HEK293 (cell line): ENCODE measurements at regions of chr17 and their contacts with region 1.

Region 1: DNA sequence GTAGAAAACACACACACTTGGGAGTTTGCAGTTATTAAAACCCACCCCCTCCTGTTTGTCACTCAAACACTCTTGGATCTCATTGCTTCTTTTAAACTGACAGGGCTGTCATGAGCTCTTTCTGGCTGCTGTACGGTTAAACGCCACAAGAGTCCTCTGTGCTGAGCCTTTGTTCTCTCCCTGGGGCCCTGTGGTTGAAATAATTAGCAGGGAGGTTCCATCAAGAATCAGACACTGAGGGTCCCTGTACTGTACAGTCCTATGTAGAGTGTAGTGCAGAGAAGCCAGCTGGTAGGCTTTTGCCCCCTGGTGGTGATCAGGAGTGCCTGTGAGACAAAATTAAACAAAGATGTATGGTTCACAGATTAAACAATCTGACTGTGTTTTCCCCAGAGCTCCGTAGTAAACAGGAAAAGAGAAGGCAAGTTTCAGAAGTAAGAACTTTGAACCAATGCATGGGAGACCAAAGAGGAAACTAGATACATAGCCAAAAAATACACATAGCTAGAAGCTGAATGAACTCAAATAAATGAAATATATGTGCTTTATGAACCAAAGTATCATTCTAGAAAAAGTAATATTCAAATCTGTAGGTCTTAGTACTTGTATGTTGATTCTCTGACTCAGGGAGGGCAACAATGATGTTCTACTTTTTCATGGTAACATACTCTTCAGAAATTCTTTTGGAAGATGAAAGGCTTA is 1.4 kb upstream of the SSH2 start:
- H3K4me3 ChIP-seq: peak overlapping the region; percentile 96; the same call in 1 of the 2 replicates
- H3K27ac ChIP-seq: 0 out of 2 replicates have a peak overlapping the region, but pooled peaks have one; percentile 93
- H3K4me1 ChIP-seq: peaks cover 14% of the 10 kb centered on the region
- CTCF ChIP-seq: peak; percentile 83

Region 2: GRCh38 chr17:29640413-29640812 is 291.0 kb before region 1 on chr17:
- CTCF ChIA-PET with region 1: interaction called, 76 read pairs
- POLR2A ChIA-PET with region 1: interaction called, 19 read pairs
- H3K4me3 ChIP-seq: no peak overlapping the region
- H3K27ac ChIP-seq: no peak overlapping the region
- H3K4me1 ChIP-seq: peaks cover 35% of the 10 kb centered on the region
- CTCF ChIP-seq: no peak

Region 3: DNA sequence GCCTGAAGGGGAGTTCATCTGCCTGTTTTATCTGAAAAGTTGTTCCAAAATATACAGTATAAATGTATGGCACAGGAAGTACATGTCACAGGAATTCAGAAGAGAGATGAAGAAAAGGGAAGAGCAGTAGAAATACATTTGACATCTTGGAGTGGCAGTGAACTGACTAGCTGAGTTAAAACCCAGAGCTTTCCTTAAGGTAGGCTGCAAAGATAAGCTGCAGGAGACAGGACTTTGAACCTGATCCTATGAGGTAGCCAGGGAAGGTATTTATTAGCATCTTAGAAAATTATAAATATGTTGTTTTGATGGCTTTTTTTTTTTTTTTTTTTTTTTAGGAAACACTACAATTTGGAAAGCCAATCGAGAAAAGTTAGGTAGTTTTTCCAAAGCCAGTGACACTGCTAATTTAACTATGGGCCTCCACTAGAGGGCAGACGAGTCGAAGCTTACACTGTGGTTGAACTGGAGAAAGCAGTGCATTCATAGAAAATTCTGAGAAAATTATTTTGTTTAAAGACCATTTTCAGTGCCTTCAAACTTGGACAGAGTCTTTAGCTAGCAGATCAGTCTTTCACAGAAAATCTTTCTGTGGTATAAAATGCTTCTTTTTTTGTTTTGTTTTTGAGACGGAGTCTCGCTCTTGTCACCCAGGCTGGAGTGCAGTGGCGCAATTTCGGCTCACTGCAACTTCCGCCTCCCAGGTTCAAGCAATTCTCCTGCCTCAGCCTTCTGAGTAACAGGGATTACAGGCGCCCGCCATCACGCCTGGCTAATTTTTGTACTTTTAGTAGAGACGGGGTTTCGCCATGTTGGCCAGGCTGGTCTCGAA is 123.6 kb before region 1 on chr17:
- CTCF ChIA-PET with region 1: interaction called, 361 read pairs
- POLR2A ChIA-PET with region 1: interaction called, 16 read pairs
- H3K4me3 ChIP-seq: no peak overlapping the region
- H3K27ac ChIP-seq: no peak overlapping the region
- H3K4me1 ChIP-seq: no peaks in the 10 kb centered on the region
- CTCF ChIP-seq: peak; percentile 23; the same call in 1 of the 2 replicates

Region 4: DNA sequence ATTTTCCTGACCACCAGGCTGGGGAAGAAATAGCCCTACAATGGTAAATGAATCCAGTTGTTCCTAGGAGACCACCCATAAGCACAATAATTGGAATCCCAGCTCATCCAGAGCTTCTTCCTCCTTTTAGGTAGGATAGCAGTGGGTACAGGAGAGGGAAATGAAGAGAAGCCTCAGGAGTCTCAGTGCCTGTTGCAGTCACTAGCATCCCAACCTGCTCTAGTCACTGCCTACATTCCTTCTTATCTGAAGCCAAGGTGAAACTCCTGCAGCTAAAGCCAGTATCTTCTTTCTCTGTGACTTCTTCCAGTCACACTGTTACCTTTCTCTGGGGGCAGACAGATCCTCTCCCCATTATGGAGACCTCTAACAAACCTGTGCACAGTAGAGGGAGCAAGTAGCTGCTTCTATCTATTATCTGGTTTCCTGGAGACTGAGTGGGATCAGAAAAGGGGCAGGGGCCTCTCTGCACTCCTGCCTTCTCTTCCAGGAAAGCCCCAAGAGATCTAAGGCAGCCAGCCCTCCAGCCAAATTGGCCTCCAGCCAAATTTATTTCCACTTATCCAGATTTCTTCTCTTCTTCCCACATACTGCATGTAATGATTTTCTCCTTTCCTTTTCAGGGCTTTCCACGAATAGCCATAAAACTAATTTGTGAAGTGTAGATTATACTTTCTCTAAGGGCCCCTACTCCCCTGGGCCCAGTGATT is 86.9 kb before region 1 on chr17:
- CTCF ChIA-PET with region 1: interaction called, 28 read pairs
- POLR2A ChIA-PET with region 1: interaction called, 3 read pairs
- H3K4me3 ChIP-seq: no peak overlapping the region
- H3K27ac ChIP-seq: peak overlapping the region; percentile 61
- H3K4me1 ChIP-seq: peaks cover 20% of the 10 kb centered on the region
- CTCF ChIP-seq: no peak

Region 5: GRCh38 chr17:29891131-29891530 is 40.3 kb before region 1 on chr17:
- CTCF ChIA-PET with region 1: interaction called, 15 read pairs
- POLR2A ChIA-PET with region 1: interaction called, 8 read pairs
- H3K4me3 ChIP-seq: no peak overlapping the region
- H3K27ac ChIP-seq: no peak overlapping the region
- H3K4me1 ChIP-seq: no peaks in the 10 kb centered on the region; the same call in 1 of the 2 replicates
- CTCF ChIP-seq: no peak

Region 6: DNA sequence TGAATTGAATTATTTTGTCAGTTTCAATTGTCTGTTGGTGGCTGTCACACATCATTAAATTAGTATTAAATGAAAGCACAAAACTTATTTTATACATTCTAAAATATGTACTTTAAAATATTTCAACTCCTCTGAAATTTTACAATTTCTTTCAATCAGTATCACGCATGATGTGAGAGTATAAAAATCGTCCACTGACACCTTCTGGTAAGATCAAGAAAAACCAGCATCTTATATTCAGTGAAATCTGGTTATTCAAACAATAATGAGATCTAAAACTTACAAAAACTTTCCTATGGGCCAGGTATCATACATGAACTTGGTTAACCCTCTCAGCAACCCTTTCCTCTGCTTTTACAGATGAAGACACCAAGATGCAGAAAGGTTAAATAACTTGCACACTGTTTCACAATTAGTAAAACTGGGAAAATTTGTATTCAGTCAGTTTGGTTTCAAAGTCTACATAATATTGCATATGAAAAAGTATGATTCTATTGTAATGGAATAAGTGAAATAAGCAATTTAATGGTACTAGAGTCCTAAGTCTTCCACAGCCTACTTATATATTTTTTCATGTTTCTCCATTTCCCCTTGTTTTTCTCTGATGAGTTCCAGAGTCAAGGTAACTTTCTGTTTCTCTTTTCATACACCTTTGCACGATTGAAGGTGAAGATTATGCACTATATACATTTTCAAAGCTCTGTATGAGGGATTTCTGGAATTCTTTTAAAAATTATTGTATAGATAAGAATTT is 68.8 kb after region 1 on chr17:
- CTCF ChIA-PET with region 1: interaction called, 10 read pairs
- POLR2A ChIA-PET with region 1: interaction called, 4 read pairs
- H3K4me3 ChIP-seq: no peak overlapping the region
- H3K27ac ChIP-seq: no peak overlapping the region
- H3K4me1 ChIP-seq: no peaks in the 10 kb centered on the region
- CTCF ChIP-seq: no peak

Region 7: GRCh38 chr17:30093463-30094147 is 162.2 kb after region 1 on chr17:
- CTCF ChIA-PET with region 1: interaction called, 52 read pairs
- POLR2A ChIA-PET with region 1: interaction called, 5 read pairs
- H3K4me3 ChIP-seq: no peak overlapping the region
- H3K27ac ChIP-seq: no peak overlapping the region
- H3K4me1 ChIP-seq: no peaks in the 10 kb centered on the region
- CTCF ChIP-seq: peak; percentile 84

Region 8: DNA sequence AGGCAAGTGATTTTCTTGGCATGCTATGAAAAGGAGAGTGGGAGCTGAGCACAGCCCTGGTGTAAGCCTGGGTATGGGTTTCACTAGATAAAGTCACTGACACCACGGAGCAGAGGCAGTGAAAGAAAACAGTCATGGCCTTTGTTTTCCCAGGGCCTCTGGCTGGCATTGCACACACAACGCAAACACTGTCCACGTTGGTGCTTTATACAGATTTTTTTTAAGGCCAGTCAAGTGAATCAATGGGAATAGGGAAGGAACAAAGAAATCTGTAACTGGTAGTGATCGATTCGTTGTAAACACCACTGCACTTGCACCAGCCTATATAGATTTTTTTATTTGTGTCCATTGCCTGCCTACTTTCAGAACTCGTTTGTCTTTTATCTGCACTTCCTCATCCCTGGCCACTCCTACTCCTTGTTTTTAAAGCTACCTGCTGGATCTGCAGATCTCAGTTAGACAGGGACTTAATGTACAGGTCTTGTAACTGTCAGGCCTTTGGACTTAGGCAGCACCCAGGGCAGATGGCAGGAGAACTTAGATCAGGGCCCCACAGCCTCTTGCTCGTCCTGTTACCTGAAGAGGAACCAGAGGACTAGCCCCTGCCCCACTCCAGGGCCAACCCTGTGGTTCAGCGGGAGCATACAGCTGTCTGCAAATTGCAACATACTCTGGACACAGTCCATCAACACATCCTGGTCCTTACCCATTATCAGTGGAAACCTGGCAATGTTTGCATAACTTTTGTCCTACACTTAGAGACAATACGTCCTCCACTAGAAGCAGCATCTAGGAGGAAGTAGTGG is 413.1 kb after region 1 on chr17:
- CTCF ChIA-PET with region 1: no interaction called
- POLR2A ChIA-PET with region 1: no interaction called
- H3K4me3 ChIP-seq: no peak overlapping the region
- H3K27ac ChIP-seq: peak overlapping the region; percentile 28; the same call in 1 of the 2 replicates
- H3K4me1 ChIP-seq: peaks cover 8% of the 10 kb centered on the region
- CTCF ChIP-seq: no peak

Region 9: DNA sequence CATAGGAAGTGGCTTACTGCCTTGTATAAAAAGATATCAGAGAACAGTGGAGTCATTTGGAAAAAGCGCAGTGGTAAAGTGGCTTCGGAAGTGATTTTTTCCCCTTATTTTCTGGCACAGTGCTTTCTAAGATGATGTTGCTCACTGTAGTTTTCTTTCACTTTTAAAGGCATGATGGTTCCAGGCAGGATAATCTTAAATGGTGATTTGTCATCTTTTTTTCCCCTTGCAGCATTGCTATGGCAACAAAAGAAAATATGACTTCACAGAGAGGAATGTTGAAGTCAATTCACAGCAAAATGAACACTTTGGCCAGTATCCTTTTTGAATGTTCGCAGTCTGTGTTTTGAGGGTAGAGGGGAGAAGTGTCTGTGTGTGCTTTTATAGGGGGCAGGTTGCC is 588.3 kb after region 1 on chr17:
- CTCF ChIA-PET with region 1: no interaction called
- POLR2A ChIA-PET with region 1: no interaction called
- H3K4me3 ChIP-seq: no peak overlapping the region
- H3K27ac ChIP-seq: no peak overlapping the region
- H3K4me1 ChIP-seq: no peaks in the 10 kb centered on the region
- CTCF ChIP-seq: no peak